ENCODE measurements at regions of chr17 and their contacts with region 1.

Region 1: GRCh38 chr17:49434821-49435670 is 20.4 kb upstream of the PHB1 start:
- DNase-seq: peak; percentile 53
- H3K4me3 ChIP-seq: no peak overlapping the region
- H3K27ac ChIP-seq: no peak overlapping the region
- H3K4me1 ChIP-seq: no peaks in the 10 kb centered on the region
- H3K27me3 ChIP-seq: peaks cover 35% of the 10 kb centered on the region

Region 2: GRCh38 chr17:49496183-49496866 is 61.3 kb after region 1 on chr17:
- in situ Hi-C with region 1: no loop called
- DNase-seq: peak; percentile 77
- H3K4me3 ChIP-seq: peak overlapping the region; percentile 57
- H3K27ac ChIP-seq: no peak overlapping the region
- H3K4me1 ChIP-seq: 0 out of 2 replicates have a peak, but pooled peaks cover 4% of the 10 kb centered on the region
- H3K27me3 ChIP-seq: peaks cover 64% of the 10 kb centered on the region

Region 3: GRCh38 chr17:49548506-49549310 is 113.7 kb after region 1 on chr17:
- in situ Hi-C with region 1: loop called (anchors 5 kb)
- DNase-seq: peak; percentile 62
- H3K4me3 ChIP-seq: no peak overlapping the region
- H3K27ac ChIP-seq: no peak overlapping the region
- H3K4me1 ChIP-seq: no peaks in the 10 kb centered on the region
- H3K27me3 ChIP-seq: peaks cover 2% of the 10 kb centered on the region; the same call in 1 of the 2 replicates